ENCODE measurements at regions of chr7 and their contacts with region 1.

Region 1: DNA sequence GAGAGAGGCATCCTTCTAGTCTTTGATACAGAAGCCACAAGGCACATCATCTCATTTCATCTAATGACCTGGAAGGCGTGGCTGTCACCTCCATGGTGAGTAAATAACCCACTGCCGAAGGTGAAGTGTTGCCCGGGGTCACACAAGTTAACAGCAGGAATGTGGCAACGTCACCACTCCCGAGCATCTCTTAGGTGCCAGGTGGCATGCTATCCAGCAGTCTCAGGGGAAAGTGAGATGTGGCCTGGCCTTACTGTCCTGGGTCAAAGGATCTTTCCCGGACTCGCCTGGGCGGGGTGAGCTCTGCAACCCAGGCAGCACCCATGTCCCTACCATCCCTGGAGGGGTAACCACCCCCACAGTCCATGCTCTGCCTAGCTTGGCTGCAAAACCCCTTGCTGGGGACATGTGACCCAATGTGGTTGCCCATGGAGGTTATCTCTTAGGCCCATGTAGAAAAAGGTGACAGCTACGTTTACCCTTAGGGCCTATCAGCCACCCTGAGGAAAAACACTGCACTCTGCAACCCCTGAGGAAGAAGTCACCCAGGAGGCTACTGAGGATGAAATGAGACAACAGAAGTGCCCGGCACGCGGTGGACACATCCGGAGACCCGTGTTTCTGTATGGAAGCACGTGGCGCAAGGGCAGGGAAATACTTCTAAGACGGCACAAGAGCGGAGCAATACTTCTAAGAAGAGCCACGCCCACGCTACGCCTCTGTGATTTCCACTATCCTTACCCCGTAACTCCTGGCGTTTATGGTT is 52.0 kb downstream of the BAIAP2L1 start:
- DNase-seq: no peak
- ATAC-seq: no peak

Region 2: DNA sequence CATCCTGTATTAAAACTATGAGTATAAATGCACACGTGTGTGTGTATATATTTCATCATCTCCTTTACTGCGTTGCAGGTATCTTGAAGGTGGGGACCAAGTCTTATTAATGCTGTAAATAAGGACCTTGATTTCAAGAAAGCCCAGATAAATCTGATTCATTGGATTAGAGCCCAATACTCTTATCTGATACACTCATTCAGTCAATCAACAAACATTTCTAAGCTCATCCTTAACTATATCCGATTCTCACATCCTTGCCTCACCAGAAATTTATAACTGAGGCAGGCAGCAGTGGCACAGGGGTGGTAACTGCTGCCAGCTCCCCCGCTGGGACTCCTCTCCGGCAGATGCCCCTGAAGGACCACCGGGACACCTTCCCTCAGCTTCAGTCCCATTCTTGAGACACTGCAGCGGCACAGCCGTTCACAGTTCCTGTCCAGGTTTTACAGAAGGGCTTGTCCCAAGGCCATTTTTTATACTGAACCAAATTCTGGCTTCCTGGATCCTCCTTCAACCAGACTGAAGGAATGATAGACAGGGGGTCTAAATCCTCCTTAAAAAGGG is 13.4 kb before region 1 on chr7:
- intact Hi-C with region 1: loop called (anchors 1 kb)
- DNase-seq: no peak
- ATAC-seq: no peak

Region 3: DNA sequence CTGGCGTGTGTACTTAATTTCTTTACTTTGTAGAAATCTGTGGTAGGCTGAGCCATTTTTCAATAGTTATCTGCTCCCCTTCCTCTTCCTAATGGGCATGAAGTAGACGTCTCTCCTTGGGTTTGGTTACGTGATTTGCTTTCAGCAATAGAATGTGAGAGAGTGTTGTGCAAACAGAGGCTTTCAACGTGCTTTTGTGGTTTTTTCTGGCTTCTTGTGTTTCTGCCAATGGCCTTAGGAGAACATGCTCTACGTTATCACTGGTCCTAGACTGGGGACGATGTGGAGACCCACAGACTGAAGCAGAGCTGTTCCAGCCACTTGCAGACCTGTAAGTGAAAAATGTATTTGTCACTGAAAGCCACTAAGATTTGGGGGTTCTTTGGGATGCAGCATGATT is 160.9 kb after region 1 on chr7:
- intact Hi-C with region 1: no loop called
- DNase-seq: no peak
- ATAC-seq: no peak